Vagina (tissue), 2 donors: ENCODE measurements at regions of chr14 and their contacts with region 1.

Region 1: GRCh38 chr14:75002392-75003249 is at the start of gene EIF2B2:
- DNase-seq: peak; percentile 96 to 97
- H3K4me3 ChIP-seq: peak within 1 kb of the TSS; percentile 85 to 97
- H3K27ac ChIP-seq: peak within 1 kb of the TSS; percentile 75
- H3K4me1 ChIP-seq: peaks cover 28% of the 10 kb centered on the region
- H3K27me3 ChIP-seq: no peaks in the 10 kb centered on the region
- CTCF ChIP-seq: peak in 2 of 3 experiments; percentile 16
- POLR2A ChIP-seq: peak in 1 of 2 donors; percentile 52
- total RNA-seq, gene EIF2B2: 22.8 TPM

Region 2: GRCh38 chr14:74955229-74956026 is 47.2 kb before region 1 on chr14 and contains the start of gene PGF:
- intact Hi-C with region 1: loop called (anchors 10 kb)
- DNase-seq: no peak
- H3K4me3 ChIP-seq: peak within 1 kb of the TSS; percentile 56 to 62
- H3K27ac ChIP-seq: peak within 1 kb of the TSS; percentile 54
- H3K4me1 ChIP-seq: peaks cover 24% of the 10 kb centered on the region
- H3K27me3 ChIP-seq: no peaks in the 10 kb centered on the region
- CTCF ChIP-seq: no peak
- POLR2A ChIP-seq: peak in 1 of 2 donors; percentile 63
- total RNA-seq, gene PGF: 8.3 TPM

Region 3: DNA sequence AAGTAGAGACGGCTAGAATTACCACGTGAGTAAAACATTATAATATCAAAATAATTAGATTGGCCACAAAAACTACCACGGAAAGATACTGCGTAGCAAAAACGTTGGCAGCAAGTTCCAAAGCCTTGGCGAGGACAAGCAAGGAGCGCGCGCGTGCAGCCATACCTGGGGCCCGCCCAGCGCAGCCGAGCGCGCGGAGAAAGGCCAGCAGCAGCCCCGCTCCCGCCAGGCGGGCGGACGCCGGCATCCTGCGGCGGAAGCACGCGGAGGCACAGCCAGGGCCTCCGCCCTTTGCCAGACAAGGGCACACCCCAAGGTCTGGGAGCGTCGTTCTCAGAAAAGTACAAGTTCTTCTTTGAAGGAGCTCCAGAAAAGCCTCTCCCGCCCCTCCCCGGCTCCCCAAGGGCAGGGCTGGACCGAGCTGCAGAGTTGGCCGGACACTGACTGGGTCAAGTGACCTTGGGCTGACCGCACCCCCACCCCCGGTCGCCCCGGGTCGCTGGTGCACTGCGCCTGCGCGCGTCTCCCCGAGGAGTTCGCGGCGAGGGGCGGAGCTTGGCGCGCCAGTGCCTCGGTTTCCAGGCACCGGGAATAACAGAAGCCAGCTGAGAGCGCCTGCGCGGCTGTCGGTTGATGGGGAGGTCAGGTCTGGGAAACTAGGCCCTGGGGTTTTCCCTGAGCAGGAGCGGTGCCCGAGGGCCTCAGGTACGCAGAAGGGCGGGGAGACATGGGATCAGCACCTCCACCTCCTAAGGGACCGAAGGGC is 66.6 kb after region 1 on chr14 and contains the start of gene ZC2HC1C:
- intact Hi-C with region 1: loop called (anchors 5 kb)
- DNase-seq: peak in 1 of 2 donors; percentile 96
- H3K4me3 ChIP-seq: peak within 1 kb of the TSS; percentile 42 to 44
- H3K27ac ChIP-seq: peak within 1 kb of the TSS; percentile 75
- H3K4me1 ChIP-seq: peaks cover 26% of the 10 kb centered on the region
- H3K27me3 ChIP-seq: no peaks in the 10 kb centered on the region
- CTCF ChIP-seq: no peak
- POLR2A ChIP-seq: no peak
- total RNA-seq, gene ZC2HC1C: not detected